CD8-positive, alpha-beta T cell (primary cell): ENCODE measurements at regions of chr3 and their contacts with region 1.

Region 1: GRCh38 chr3:149120051-149120972 is 9.1 kb upstream of the HPS3 start:
- DNase-seq: peak in 3 of 9 experiments; percentile 15 to 81 (median 72)
- ATAC-seq: peak; percentile 81
- H3K4me3 ChIP-seq: no peak overlapping the region
- H3K4me3 Mint-ChIP-seq: no peak overlapping the region
- H3K27ac ChIP-seq: no peak overlapping the region
- H3K27ac Mint-ChIP-seq: no peak overlapping the region
- H3K4me1 ChIP-seq: no peaks in the 10 kb centered on the region
- H3K4me1 Mint-ChIP-seq: no peaks in the 10 kb centered on the region
- H3K27me3 ChIP-seq: no peaks in the 10 kb centered on the region
- H3K27me3 Mint-ChIP-seq: peaks cover 7% of the 10 kb centered on the region
- CTCF ChIP-seq: peak; percentile 71

Region 2: DNA sequence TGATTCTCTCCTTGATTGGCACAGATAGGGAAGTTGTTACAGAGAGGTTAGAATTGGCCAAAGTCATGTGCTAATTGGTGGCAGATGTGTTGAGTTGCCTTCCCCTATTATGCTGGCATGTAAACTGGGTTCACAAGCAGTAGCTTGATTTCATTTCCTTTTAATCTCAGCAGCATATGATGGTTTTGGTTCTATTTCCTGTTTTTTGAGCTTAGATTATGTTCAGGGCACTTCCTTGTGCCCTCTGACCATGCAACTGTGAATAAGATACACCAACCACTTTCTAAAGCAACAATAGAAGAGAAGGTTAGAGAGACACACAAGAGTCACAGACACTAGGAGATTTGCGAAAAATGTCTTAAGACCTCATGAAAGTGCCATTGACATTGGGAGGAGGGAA is 25.7 kb after region 1 on chr3:
- CTCF ChIA-PET with region 1: interaction called, 10 read pairs
- POLR2A ChIA-PET with region 1: interaction called, 3 read pairs
- intact Hi-C with region 1: no loop called
- DNase-seq: peak in 2 of 9 experiments; percentile 8 to 49
- ATAC-seq: peak; percentile 51
- H3K4me3 ChIP-seq: no peak overlapping the region
- H3K4me3 Mint-ChIP-seq: no peak overlapping the region
- H3K27ac ChIP-seq: peak overlapping the region in 1 of 2 experiments; percentile 36
- H3K27ac Mint-ChIP-seq: no peak overlapping the region
- H3K4me1 ChIP-seq: peaks cover 18% of the 10 kb centered on the region
- H3K4me1 Mint-ChIP-seq: peaks cover 10% of the 10 kb centered on the region
- H3K27me3 ChIP-seq: no peaks in the 10 kb centered on the region
- H3K27me3 Mint-ChIP-seq: no peaks in the 10 kb centered on the region
- CTCF ChIP-seq: no peak

Region 3: DNA sequence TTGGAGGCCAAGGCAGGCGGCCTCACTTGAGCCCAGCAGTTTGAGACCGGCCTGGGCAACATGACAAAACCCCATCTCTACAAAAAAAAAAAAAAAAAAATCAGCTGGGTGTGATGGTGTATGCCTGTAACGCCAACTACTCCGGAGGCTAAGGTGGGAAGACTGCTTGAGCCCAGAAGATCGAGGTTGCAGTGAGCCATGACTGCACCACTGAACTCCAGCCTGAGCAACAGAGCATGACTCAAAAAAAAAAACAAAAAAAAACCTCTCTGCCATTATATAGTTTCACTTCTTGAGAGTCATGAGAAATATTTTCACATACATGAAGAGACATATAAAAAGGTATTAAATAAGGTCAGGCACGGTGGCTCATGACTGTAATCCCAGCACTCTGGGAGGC is 147.3 kb after region 1 on chr3:
- CTCF ChIA-PET with region 1: interaction called, 125 read pairs
- POLR2A ChIA-PET with region 1: no interaction called
- intact Hi-C with region 1: no loop called
- DNase-seq: no peak
- ATAC-seq: no peak
- H3K4me3 ChIP-seq: no peak overlapping the region
- H3K4me3 Mint-ChIP-seq: no peak overlapping the region
- H3K27ac ChIP-seq: no peak overlapping the region
- H3K27ac Mint-ChIP-seq: no peak overlapping the region
- H3K4me1 ChIP-seq: no peaks in the 10 kb centered on the region
- H3K4me1 Mint-ChIP-seq: no peaks in the 10 kb centered on the region
- H3K27me3 ChIP-seq: no peaks in the 10 kb centered on the region
- H3K27me3 Mint-ChIP-seq: no peaks in the 10 kb centered on the region
- CTCF ChIP-seq: no peak

Region 4: GRCh38 chr3:149342413-149343380 is 222.4 kb after region 1 on chr3:
- CTCF ChIA-PET with region 1: interaction called, 6 read pairs
- POLR2A ChIA-PET with region 1: no interaction called
- intact Hi-C with region 1: loop called in 1 of 2 experiments (anchors 2 kb)
- DNase-seq: peak in 1 of 9 experiments; percentile 5
- ATAC-seq: no peak
- H3K4me3 ChIP-seq: no peak overlapping the region
- H3K4me3 Mint-ChIP-seq: no peak overlapping the region
- H3K27ac ChIP-seq: no peak overlapping the region
- H3K27ac Mint-ChIP-seq: no peak overlapping the region
- H3K4me1 ChIP-seq: no peaks in the 10 kb centered on the region
- H3K4me1 Mint-ChIP-seq: no peaks in the 10 kb centered on the region
- H3K27me3 ChIP-seq: peaks cover 0 to 2% of the 10 kb centered on the region in 2 experiments
- H3K27me3 Mint-ChIP-seq: peaks cover 14% of the 10 kb centered on the region
- CTCF ChIP-seq: no peak

Region 5: DNA sequence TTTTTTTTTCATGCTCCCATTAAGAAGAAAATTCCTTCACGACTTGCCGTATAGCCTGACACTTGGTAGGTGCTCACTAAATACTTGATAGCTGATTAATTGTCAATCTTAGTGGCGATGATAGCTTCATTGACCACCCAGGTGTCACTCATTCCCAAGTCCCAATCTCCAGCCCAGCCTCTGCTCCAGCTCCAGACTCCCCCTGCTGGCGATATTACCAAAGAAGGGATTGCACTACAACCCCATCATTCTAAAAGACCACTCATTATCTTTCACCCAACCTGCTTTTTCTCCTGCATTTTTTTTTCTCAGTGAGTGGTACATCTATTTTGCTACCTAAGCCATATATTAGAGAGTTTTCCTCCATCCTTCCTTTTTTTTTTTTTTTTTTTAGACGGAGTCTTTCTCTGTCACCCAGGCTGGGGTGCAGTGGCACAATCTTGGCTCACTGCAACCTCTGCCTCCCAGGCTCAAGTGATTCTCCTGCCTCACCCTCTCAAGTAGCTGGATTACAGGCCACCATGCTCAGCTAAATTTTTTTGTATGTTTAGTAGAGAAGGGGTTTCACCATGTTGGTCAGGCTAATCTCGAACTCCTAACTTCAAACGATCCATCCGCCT is 651.5 kb after region 1 on chr3:
- CTCF ChIA-PET with region 1: interaction called, 6 read pairs
- POLR2A ChIA-PET with region 1: no interaction called
- intact Hi-C with region 1: loop called in 1 of 2 experiments (anchors 1 kb)
- DNase-seq: peak in 5 of 9 experiments; percentile 24 to 54 (median 34)
- ATAC-seq: peak; percentile 46
- H3K4me3 ChIP-seq: no peak overlapping the region
- H3K4me3 Mint-ChIP-seq: no peak overlapping the region
- H3K27ac ChIP-seq: no peak overlapping the region
- H3K27ac Mint-ChIP-seq: no peak overlapping the region
- H3K4me1 ChIP-seq: no peaks in the 10 kb centered on the region
- H3K4me1 Mint-ChIP-seq: no peaks in the 10 kb centered on the region
- H3K27me3 ChIP-seq: no peaks in the 10 kb centered on the region
- H3K27me3 Mint-ChIP-seq: peaks cover 14% of the 10 kb centered on the region
- CTCF ChIP-seq: peak; percentile 46